ENCODE measurements at regions of chr20 and their contacts with region 1.

Region 1: DNA sequence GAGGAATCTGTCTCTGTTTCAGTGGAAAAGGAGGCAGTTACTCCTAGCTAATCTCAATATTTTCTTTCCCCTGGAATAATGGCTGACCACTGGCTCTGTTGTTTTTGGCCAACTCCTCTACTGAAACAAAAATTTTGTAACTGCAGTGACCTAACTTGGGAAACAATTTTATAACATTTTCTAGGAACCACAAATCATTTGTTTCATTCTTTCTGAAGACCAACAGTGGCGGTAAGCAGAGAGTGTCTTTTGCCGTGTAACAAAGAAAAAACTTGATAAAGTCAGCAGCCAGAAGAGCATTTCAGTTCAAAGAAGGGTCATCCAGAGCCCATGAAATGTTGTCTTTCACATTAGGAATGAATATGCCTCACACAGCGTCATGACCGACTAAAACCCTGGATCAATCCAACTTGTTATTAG is 11.8 kb upstream of the BFSP1 start:
- DNase-seq: no peak
- ATAC-seq: no peak
- H3K4me3 ChIP-seq: no peak overlapping the region
- H3K27ac ChIP-seq: peak overlapping the region; percentile 41; the same call in 1 of the 2 replicates
- H3K4me1 ChIP-seq: peaks cover 10% of the 10 kb centered on the region
- H3K27me3 ChIP-seq: no peaks in the 10 kb centered on the region
- CTCF ChIP-seq: no peak

Region 2: GRCh38 chr20:17395729-17396128 is 147.3 kb before region 1 on chr20:
- CTCF ChIA-PET with region 1: no interaction called
- POLR2A ChIA-PET with region 1: no interaction called
- in situ Hi-C with region 1: no loop called
- intact Hi-C with region 1: no loop called
- DNase-seq: no peak
- ATAC-seq: no peak
- H3K4me3 ChIP-seq: no peak overlapping the region
- H3K27ac ChIP-seq: no peak overlapping the region
- H3K4me1 ChIP-seq: no peaks in the 10 kb centered on the region
- H3K27me3 ChIP-seq: peaks cover 9% of the 10 kb centered on the region
- CTCF ChIP-seq: no peak

Region 3: GRCh38 chr20:17841751-17842215 is 298.8 kb after region 1 on chr20:
- CTCF ChIA-PET with region 1: no interaction called
- POLR2A ChIA-PET with region 1: interaction called, 10 read pairs
- in situ Hi-C with region 1: no loop called
- intact Hi-C with region 1: no loop called
- DNase-seq: no peak
- ATAC-seq: no peak
- H3K4me3 ChIP-seq: no peak overlapping the region
- H3K27ac ChIP-seq: no peak overlapping the region
- H3K4me1 ChIP-seq: peaks cover 11% of the 10 kb centered on the region
- H3K27me3 ChIP-seq: no peaks in the 10 kb centered on the region
- CTCF ChIP-seq: no peak

Region 4: GRCh38 chr20:18360635-18361034 is 817.6 kb after region 1 on chr20:
- CTCF ChIA-PET with region 1: no interaction called
- POLR2A ChIA-PET with region 1: interaction called, 12 read pairs
- in situ Hi-C with region 1: no loop called
- intact Hi-C with region 1: no loop called
- DNase-seq: no peak
- ATAC-seq: no peak
- H3K4me3 ChIP-seq: no peak overlapping the region
- H3K27ac ChIP-seq: no peak overlapping the region
- H3K4me1 ChIP-seq: no peaks in the 10 kb centered on the region
- H3K27me3 ChIP-seq: no peaks in the 10 kb centered on the region
- CTCF ChIP-seq: no peak